Activated CD4-positive, alpha-beta T cell treated with anti-CD3 and anti-CD28 coated beads, Interleukin-2, amount 10 ng/mL, durations not matched to agents 24 days and 14 days (primary cell): ENCODE measurements at regions of chr4 and their contacts with region 1.

Region 1: DNA sequence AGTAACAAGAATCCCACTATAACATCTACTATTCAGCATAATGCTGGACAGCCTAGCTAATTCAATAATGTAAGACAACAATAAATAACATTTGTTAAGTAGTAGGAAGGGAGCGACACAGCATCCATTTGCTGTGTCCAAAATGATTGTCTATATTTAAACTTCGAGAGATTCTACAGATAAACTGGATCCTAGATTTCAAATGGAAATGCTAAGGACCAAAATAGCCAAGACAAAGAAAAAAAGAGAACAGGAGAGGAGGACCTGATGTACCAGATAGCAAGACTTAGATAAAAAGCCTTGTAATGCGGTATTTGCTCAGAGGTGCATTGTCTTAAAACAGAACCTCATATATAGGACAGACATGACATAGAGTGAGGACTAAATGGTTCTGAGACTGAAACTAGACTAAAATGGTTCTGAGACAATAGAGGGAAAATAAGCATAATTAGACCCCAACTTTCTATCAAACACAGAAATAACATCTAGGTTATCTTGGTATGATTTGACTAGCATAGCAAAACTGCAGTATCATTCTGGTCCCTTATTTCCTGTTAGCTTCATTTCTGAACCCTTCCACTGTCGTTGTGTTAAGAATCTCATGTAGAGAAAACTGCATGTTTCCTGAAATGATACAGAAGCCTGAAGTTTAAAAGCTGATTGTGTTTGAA is 3.8 kb downstream of the HPGDS start:
- DNase-seq: no peak
- H3K4me3 Mint-ChIP-seq: peak overlapping the region; percentile 70
- H3K27ac Mint-ChIP-seq: peak overlapping the region; percentile 77
- H3K4me1 Mint-ChIP-seq: peaks cover 14% of the 10 kb centered on the region
- H3K27me3 Mint-ChIP-seq: no peaks in the 10 kb centered on the region

Region 2: DNA sequence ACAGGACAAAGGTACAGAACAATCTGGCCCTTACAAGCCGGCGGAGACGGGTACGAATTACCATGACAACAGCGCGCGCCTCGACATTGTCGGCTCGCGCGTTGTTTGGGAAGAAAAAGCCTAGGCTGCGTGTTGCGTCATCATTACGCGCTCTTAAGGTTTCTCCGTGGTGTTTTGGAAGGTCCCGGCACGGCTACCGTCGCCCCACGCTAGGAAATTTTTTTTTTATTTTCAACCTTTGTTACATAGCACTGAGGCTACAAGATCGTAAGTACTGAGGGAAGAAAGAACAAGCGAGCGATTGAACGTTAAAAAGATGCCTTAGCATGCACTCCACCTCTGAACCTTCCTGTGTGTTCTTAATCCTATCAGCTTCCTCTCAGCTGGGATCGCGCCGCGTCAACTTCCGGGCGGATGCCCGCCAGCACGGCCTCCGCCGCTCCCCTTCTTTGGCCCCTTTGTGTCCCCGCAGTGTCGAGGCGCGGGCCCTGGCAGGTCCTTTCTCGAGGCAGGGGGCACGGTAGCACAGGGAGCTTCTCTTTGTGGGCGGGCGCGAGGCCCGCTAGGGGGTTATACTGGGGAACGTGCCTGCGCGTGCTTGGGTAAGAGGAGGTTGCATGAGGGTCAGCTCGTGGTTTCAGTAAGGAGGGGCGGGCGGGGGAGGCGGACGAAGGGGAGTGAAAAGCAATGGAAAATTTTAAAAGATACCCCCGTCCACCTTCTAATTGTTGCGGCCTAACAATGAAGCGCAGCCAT is 131.2 kb before region 1 on chr4 and contains the start of gene SMARCAD1:
- intact Hi-C with region 1: loop called (anchors 1 kb)
- DNase-seq: peak; percentile 96
- H3K4me3 Mint-ChIP-seq: peak within 1 kb of the TSS; percentile 96
- H3K27ac Mint-ChIP-seq: peak within 1 kb of the TSS; percentile 98
- H3K4me1 Mint-ChIP-seq: peaks cover 32% of the 10 kb centered on the region
- H3K27me3 Mint-ChIP-seq: peaks cover 3% of the 10 kb centered on the region
- total RNA-seq, gene SMARCAD1: 45.6 and 45.7 TPM in 2 replicates

Region 3: GRCh38 chr4:94285666-94286065 is 53.1 kb before region 1 on chr4:
- intact Hi-C with region 1: loop called (anchors 2 kb)
- DNase-seq: no peak
- H3K4me3 Mint-ChIP-seq: no peak overlapping the region
- H3K27ac Mint-ChIP-seq: peak overlapping the region; percentile 43
- H3K4me1 Mint-ChIP-seq: peaks cover 3% of the 10 kb centered on the region
- H3K27me3 Mint-ChIP-seq: no peaks in the 10 kb centered on the region

Region 4: GRCh38 chr4:94349193-94349592 is 10.4 kb after region 1 on chr4:
- intact Hi-C with region 1: loop called (anchors 1 kb)
- DNase-seq: no peak
- H3K4me3 Mint-ChIP-seq: no peak overlapping the region
- H3K27ac Mint-ChIP-seq: peak overlapping the region; percentile 80
- H3K4me1 Mint-ChIP-seq: peaks cover 26% of the 10 kb centered on the region
- H3K27me3 Mint-ChIP-seq: peaks cover 7% of the 10 kb centered on the region

Region 5: GRCh38 chr4:94390804-94391410 is 52.1 kb after region 1 on chr4:
- intact Hi-C with region 1: loop called (anchors 2 kb)
- DNase-seq: peak; percentile 70
- H3K4me3 Mint-ChIP-seq: no peak overlapping the region
- H3K27ac Mint-ChIP-seq: no peak overlapping the region
- H3K4me1 Mint-ChIP-seq: no peaks in the 10 kb centered on the region
- H3K27me3 Mint-ChIP-seq: peaks cover 3% of the 10 kb centered on the region

Region 6: GRCh38 chr4:94525993-94526728 is 187.3 kb after region 1 on chr4:
- intact Hi-C with region 1: no loop called
- DNase-seq: no peak
- H3K4me3 Mint-ChIP-seq: no peak overlapping the region
- H3K27ac Mint-ChIP-seq: no peak overlapping the region
- H3K4me1 Mint-ChIP-seq: peaks cover 3% of the 10 kb centered on the region
- H3K27me3 Mint-ChIP-seq: no peaks in the 10 kb centered on the region